OCI-LY7 (cell line): ENCODE measurements at regions of chrX and their contacts with region 1.

Region 1: GRCh38 chrX:17024886-17025285 is 78.4 kb downstream of the REPS2 start:
- DNase-seq: peak; percentile 52
- H3K4me3 ChIP-seq: no peak overlapping the region
- H3K27ac ChIP-seq: no peak overlapping the region
- H3K4me1 ChIP-seq: peaks cover 9% of the 10 kb centered on the region
- CTCF ChIP-seq: no peak

Region 2: GRCh38 chrX:16695079-16695676 is 329.7 kb before region 1 on chrX:
- CTCF ChIA-PET with region 1: no interaction called
- POLR2A ChIA-PET with region 1: no interaction called
- intact Hi-C with region 1: no loop called
- DNase-seq: peak; percentile 54
- H3K4me3 ChIP-seq: no peak overlapping the region
- H3K27ac ChIP-seq: no peak overlapping the region
- H3K4me1 ChIP-seq: no peaks in the 10 kb centered on the region
- CTCF ChIP-seq: peak; percentile 83

Region 3: GRCh38 chrX:16826207-16826606 is 198.7 kb before region 1 on chrX:
- CTCF ChIA-PET with region 1: no interaction called
- POLR2A ChIA-PET with region 1: no interaction called
- intact Hi-C with region 1: no loop called
- DNase-seq: peak; percentile 45
- H3K4me3 ChIP-seq: no peak overlapping the region
- H3K27ac ChIP-seq: peak overlapping the region; percentile 15
- H3K4me1 ChIP-seq: no peaks in the 10 kb centered on the region
- CTCF ChIP-seq: peak; percentile 76

Region 4: DNA sequence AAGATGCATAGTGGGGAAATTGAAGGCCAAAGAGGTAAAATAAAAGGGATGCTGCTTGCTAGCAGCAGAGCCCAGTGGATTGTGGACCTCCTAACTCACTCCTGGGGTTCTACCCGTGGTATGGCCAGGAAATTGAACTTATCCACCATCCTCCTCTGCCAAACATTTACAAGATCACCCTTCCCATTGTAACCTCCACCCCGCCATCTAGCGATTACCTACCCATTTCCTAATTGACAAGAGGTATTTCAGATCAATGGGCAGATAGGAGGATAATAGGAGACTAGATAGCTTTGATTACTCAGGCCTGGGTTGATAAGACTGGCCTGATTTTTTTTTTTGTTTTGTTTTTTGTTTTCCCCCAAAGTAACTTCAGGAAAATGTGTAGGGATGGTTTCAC is 10.7 kb before region 1 on chrX:
- CTCF ChIA-PET with region 1: no interaction called
- POLR2A ChIA-PET with region 1: interaction called, 11 read pairs
- intact Hi-C with region 1: no loop called
- DNase-seq: no peak
- H3K4me3 ChIP-seq: no peak overlapping the region
- H3K27ac ChIP-seq: no peak overlapping the region
- H3K4me1 ChIP-seq: no peaks in the 10 kb centered on the region
- CTCF ChIP-seq: no peak